ENCODE measurements at regions of chr12 and their contacts with region 1.

Region 1: GRCh38 chr12:125402874-125403789 is 337.9 kb downstream of the AACS start:
- DNase-seq: no peak
- ATAC-seq: no peak

Region 2: DNA sequence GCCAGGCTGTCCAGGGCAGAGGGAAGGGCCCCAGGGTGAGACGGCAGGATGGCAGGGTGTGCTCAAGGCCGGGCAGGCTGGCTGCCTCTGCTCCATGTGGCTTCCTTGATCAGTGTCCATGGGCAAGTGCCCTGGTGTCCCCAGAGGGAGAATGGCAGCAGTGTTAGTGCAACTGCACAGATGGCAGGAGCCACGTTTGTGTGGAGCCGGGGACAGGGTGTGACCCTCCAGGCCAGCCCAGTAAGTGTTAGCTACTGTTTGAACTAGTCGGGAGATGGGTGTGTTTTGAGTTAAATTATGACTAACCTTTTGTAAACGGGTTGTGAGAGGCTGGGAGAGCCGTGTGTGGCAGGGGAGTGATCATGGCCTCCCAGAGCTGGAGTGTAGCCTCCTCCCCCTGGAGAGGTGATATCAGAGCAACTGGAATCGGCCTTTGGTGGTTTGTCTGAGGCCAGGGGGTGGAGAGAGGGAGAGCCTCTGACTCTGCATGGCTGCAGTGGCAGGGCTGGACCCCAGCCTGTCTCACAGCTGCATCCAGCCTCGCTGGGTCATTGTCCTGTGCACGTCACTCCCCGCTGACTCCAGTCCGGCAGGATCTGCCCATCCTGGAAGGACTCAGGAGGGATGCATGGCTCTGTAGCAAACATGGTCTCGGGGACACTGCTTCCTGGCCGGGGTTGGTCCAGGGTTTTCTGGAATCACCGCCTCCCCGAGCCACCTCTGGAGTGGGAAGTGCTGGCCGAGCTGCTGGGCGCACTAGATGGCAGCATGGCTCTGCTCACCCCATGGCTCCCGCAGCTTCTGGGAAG is 310.1 kb before region 1 on chr12:
- intact Hi-C with region 1: loop called (anchors 5 kb)
- DNase-seq: no peak
- ATAC-seq: peak; percentile 83

Region 3: DNA sequence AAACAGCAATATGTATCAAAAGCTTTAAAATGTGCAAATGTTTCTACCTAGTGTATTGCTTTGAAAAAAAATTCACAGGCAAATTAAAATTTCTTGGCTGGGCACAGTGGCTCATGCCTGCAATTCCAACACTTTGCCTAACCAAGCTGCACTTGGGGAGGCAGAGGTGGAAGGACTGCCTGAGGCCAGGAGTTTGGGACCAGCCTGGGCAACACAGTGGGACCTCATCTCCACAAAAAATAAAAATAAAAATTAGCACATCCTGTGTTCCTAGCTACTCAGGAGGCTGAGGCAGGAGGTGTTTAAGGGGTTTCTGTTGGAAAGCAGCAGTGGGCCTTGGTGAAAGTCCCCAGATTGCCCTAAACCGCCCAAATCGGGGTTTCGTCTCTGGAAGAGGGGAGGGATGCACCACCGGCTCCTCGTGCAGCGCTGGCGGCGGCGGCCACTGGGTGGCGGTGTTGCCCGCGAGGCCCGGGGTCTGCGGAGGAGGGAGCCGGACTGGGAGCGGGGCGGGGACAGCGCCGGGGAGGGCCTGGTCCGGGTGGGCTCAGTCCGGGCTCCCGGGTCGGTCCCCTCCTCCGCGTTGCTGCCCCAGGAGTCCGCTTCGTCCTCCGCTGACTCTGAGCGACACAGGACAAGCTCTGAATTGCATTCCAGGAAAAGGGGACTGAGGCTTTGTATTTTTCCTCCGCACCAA is 72.3 kb before region 1 on chr12:
- intact Hi-C with region 1: loop called (anchors 1 kb)
- DNase-seq: peak; percentile 79
- ATAC-seq: peak; percentile 89

Measured in Right ventricle myocardium inferior (tissue), 1 donor.